Activated B cell treated with CpG ODN at 0.5 μM for 24 hours (primary cell): ENCODE measurements at regions of chr17 and their contacts with region 1.

Region 1: DNA sequence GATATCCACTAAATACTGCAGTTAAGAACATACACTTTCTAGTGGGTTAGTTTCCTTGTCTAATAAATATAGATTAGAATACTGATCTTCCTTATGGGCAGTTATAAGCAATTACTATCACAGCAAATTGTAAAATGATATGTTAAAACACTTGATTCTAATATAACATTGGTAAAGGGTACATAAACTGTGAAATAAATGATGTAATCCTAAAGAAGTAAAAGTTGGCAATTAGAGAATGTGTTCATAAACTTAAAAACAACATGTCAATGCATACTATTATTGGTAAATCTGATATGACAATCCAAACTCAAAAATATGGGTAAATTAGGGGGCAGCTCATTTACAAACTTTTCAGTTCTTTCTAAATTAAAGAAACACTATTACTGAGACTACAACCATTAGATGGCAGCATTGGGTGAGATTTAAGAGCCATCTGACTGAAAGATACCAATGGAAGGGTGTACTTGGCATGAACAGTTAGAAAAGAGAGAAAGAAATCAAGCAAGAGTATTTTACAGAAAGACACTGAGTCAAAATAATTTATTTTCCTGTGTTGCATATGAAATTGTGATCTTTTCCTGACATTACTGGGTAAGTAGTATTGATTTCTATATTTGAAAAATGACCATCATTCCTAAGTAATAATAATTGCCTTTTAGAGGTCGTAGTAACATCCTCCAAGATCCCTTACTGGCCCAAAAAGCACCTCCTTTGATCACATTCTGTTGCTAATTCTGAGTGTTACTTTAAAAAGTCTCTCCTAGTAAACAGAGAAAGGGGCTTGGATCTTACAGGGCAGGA is 119.6 kb downstream of the SPAG9 start:
- DNase-seq: no peak
- ATAC-seq: peak; percentile 67
- H3K4me3 Mint-ChIP-seq: no peak overlapping the region
- H3K27ac Mint-ChIP-seq: no peak overlapping the region
- H3K4me1 Mint-ChIP-seq: no peaks in the 10 kb centered on the region
- H3K27me3 Mint-ChIP-seq: no peaks in the 10 kb centered on the region
- CTCF ChIP-seq: no peak

Region 2: GRCh38 chr17:51056813-51057510 is 55.9 kb after region 1 on chr17:
- CTCF ChIA-PET with region 1: interaction called, 215 read pairs
- POLR2A ChIA-PET with region 1: interaction called, 3 read pairs
- intact Hi-C with region 1: loop called (anchors 1 kb)
- DNase-seq: no peak
- ATAC-seq: peak; percentile 71
- H3K4me3 Mint-ChIP-seq: no peak overlapping the region
- H3K27ac Mint-ChIP-seq: no peak overlapping the region
- H3K4me1 Mint-ChIP-seq: peaks cover 20% of the 10 kb centered on the region
- H3K27me3 Mint-ChIP-seq: no peaks in the 10 kb centered on the region
- CTCF ChIP-seq: peak; percentile 63

Region 3: GRCh38 chr17:51120739-51121617 is 119.9 kb after region 1 on chr17 and contains the start of gene SPAG9:
- CTCF ChIA-PET with region 1: interaction called, 5 read pairs
- POLR2A ChIA-PET with region 1: interaction called, 3 read pairs
- intact Hi-C with region 1: loop called (anchors 1 kb)
- DNase-seq: peak; percentile 95
- ATAC-seq: peak; percentile 83
- H3K4me3 Mint-ChIP-seq: peak within 1 kb of the TSS; percentile 94
- H3K27ac Mint-ChIP-seq: peak within 1 kb of the TSS; percentile 99
- H3K4me1 Mint-ChIP-seq: peaks cover 56% of the 10 kb centered on the region
- H3K27me3 Mint-ChIP-seq: no peaks in the 10 kb centered on the region
- CTCF ChIP-seq: no peak
- total RNA-seq, gene SPAG9: 41.6 and 49.3 TPM in 2 replicates

Region 4: GRCh38 chr17:51153210-51154072 is 152.4 kb after region 1 on chr17 and contains the start of gene NME1:
- CTCF ChIA-PET with region 1: interaction called, 86 read pairs
- POLR2A ChIA-PET with region 1: interaction called, 4 read pairs
- intact Hi-C with region 1: loop called (anchors 1 kb)
- DNase-seq: peak; percentile 99
- ATAC-seq: peak; percentile 88
- H3K4me3 Mint-ChIP-seq: no peak within 1 kb of the TSS
- H3K27ac Mint-ChIP-seq: no peak within 1 kb of the TSS
- H3K4me1 Mint-ChIP-seq: peaks cover 7% of the 10 kb centered on the region
- H3K27me3 Mint-ChIP-seq: no peaks in the 10 kb centered on the region
- CTCF ChIP-seq: no peak
- total RNA-seq, gene NME1: 130 and 138 TPM in 2 replicates

Region 5: DNA sequence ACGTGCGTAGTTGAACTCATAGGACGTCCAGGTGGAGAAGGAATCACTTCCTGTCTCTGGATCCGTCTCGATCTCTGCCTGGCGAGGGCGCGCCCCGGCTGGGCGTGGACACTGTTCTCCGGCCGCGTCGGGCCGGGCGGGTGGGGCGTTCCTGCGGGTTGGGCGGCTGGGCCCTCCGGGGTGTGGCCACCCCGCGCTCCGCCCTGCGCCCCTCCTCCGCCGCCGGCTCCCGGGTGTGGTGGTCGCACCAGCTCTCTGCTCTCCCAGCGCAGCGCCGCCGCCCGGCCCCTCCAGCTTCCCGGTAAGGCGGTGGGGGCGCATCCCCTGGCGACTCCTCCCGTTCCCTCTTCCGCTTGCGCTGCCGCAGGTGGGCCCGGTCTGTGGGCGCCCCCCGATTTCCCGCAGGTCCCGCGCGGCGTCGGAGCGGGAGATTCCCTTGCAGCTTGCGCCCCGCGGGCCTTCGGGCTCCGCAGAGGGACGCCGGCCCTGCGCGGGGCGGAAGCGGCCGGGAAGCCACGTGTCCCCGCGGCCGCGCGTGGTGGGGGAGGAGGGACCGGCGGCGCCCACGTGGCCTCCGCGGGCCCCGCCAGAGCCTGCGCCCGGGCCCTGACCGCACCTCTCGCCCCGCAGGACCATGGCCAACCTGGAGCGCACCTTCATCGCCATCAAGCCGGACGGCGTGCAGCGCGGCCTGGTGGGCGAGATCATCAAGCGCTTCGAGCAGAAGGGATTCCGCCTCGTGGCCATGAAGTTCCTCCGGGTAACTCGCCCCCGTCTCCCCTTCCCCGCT is 165.4 kb after region 1 on chr17 and contains the start of gene NME2:
- CTCF ChIA-PET with region 1: interaction called, 5 read pairs
- POLR2A ChIA-PET with region 1: no interaction called
- intact Hi-C with region 1: loop called (anchors 5 kb)
- DNase-seq: peak; percentile 85
- ATAC-seq: peak; percentile 86
- H3K4me3 Mint-ChIP-seq: peak within 1 kb of the TSS; percentile 86
- H3K27ac Mint-ChIP-seq: peak within 1 kb of the TSS; percentile 90
- H3K4me1 Mint-ChIP-seq: peaks cover 24% of the 10 kb centered on the region
- H3K27me3 Mint-ChIP-seq: no peaks in the 10 kb centered on the region
- CTCF ChIP-seq: no peak
- total RNA-seq, gene NME2: 439 and 524 TPM in 2 replicates

Region 6: GRCh38 chr17:51537996-51538550 is 537.0 kb after region 1 on chr17:
- CTCF ChIA-PET with region 1: no interaction called
- POLR2A ChIA-PET with region 1: no interaction called
- intact Hi-C with region 1: loop called (anchors 10 kb)
- DNase-seq: no peak
- ATAC-seq: no peak
- H3K4me3 Mint-ChIP-seq: no peak overlapping the region
- H3K27ac Mint-ChIP-seq: no peak overlapping the region
- H3K4me1 Mint-ChIP-seq: no peaks in the 10 kb centered on the region
- H3K27me3 Mint-ChIP-seq: peaks cover 2% of the 10 kb centered on the region
- CTCF ChIP-seq: no peak

Region 7: DNA sequence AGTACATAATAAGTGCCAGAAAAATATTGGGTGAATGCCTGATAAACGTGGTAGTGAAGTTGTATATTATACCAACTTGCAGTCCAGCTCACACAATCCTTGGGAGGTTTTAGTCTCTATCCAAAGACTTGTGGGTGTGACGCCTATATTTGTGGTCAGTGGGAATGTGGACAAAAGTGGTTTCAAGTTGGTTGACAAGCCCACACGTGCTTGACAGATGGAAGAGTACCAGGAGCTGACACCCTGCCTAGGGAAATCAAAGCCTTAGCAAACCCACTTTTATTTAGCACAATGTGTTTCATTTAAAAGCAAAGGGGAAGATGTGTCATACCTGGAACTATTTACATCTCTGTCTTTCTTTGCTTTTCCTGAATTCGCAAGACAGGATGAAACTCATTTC is 1078.5 kb after region 1 on chr17:
- CTCF ChIA-PET with region 1: no interaction called
- POLR2A ChIA-PET with region 1: no interaction called
- intact Hi-C with region 1: no loop called
- DNase-seq: no peak
- ATAC-seq: no peak
- H3K4me3 Mint-ChIP-seq: no peak overlapping the region
- H3K27ac Mint-ChIP-seq: no peak overlapping the region
- H3K4me1 Mint-ChIP-seq: no peaks in the 10 kb centered on the region
- H3K27me3 Mint-ChIP-seq: no peaks in the 10 kb centered on the region
- CTCF ChIP-seq: no peak